Ovary (tissue), 10 donors: ENCODE measurements at regions of chr12 and their contacts with region 1.

Region 1: DNA sequence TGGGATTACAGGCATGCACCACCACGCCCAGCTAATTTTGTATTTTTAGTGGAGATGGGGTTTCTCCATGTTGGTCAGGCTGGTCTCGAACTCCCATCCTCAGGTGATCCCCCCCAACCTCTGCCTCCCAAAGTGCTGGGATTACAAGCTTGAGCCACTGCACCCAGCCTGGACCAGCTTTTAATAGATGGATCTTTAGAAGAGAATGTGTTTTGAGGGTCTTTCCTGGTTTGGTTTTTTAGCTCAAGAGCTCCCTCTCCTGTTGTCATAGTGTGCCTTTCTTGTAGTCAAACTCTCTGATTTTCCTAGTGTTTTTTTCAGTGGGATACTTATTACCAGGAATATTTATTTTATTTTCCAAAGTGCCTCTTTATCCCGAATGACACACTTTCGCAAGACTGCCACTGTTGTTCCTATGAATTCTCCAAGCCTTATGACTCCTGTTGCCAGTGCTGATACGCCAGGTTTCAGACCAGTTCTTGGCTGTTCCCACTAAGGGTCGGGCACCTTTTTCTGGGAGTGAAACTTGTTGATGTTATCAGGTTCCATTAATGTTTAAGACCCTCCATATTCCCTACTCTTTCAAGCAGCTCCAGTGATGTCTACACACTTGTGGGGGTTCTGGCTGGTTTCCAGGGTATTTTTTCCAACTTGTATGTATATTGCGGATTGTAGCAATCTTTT is 31.5 kb upstream of the LIMA1 start:
- DNase-seq: no peak
- H3K4me3 ChIP-seq: no peak overlapping the region
- H3K27ac ChIP-seq: no peak overlapping the region
- H3K4me1 ChIP-seq: no peaks in the 10 kb centered on the region
- H3K27me3 ChIP-seq: no peaks in the 10 kb centered on the region
- CTCF ChIP-seq: peak; percentile 33 to 50 (median 44)
- EP300 ChIP-seq: no peak
- POLR2A ChIP-seq: no peak

Region 2: DNA sequence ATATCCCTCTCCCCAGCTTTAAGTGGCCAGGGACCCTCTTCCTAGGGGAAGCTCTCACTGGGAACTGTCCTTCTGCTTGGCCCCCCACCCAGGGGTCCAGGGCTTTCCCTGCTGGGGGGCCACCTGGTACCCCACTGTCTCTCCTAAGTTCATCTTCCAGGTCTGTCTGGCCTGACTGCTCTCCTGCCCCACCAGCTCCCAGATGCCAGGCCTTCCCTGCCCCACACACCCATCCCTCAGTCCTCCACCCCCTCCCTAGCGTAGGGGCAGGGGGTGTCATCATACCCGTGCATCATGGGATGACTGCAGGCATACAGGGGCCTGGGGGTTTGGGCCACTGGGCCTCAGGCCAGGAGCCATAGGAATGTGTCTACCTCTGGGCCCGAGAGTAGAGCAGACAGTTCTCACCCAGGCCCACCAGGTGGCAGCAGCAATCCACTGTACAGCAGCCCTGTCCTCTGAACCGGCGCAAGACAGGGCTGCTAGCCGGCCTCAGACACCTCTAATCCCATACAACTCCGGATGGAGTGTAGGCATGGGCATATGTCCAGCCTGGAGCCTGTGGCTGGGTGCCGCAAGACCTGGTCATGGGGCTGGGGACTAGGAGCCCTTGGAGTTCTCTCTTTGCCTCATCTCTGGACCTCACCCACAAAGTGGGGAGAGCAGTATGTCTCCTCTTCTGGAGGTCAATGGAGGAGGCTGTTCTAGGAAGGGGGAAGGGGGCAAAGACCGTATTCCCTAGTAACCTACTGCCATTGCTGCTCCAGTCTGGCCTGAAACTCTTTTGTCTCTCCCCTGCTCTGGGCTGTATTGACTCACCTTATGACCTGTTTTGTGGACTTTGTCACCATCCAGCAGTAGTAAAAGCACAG is 239.6 kb before region 1 on chr12:
- intact Hi-C with region 1: loop called in 3 of 4 experiments (anchors 10 kb)
- DNase-seq: peak; percentile 78 to 90 (median 88)
- H3K4me3 ChIP-seq: no peak overlapping the region
- H3K27ac ChIP-seq: no peak overlapping the region
- H3K4me1 ChIP-seq: no peaks in the 10 kb centered on the region
- H3K27me3 ChIP-seq: no peaks in the 10 kb centered on the region
- CTCF ChIP-seq: peak; percentile 87 to 96 (median 92)
- EP300 ChIP-seq: no peak
- POLR2A ChIP-seq: no peak

Region 3: GRCh38 chr12:50084775-50085614 is 229.8 kb before region 1 on chr12 and contains the start of gene SMARCD1:
- intact Hi-C with region 1: loop called in 1 of 4 experiments (anchors 10 kb)
- DNase-seq: peak; percentile 91 to 93 (median 91)
- H3K4me3 ChIP-seq: peak within 1 kb of the TSS; percentile 85
- H3K27ac ChIP-seq: peak within 1 kb of the TSS; percentile 79 to 96
- H3K4me1 ChIP-seq: peaks cover 2% of the 10 kb centered on the region
- H3K27me3 ChIP-seq: no peaks in the 10 kb centered on the region
- CTCF ChIP-seq: no peak
- EP300 ChIP-seq: no peak
- POLR2A ChIP-seq: no peak
- total RNA-seq, gene SMARCD1: 33.5 to 57.7 (median 50.7) TPM

Region 4: GRCh38 chr12:50187084-50187900 is 127.5 kb before region 1 on chr12:
- intact Hi-C with region 1: loop called in 2 of 4 experiments (anchors 10 kb)
- DNase-seq: no peak
- H3K4me3 ChIP-seq: no peak overlapping the region
- H3K27ac ChIP-seq: no peak overlapping the region
- H3K4me1 ChIP-seq: peaks cover 4% of the 10 kb centered on the region
- H3K27me3 ChIP-seq: no peaks in the 10 kb centered on the region
- CTCF ChIP-seq: no peak
- EP300 ChIP-seq: no peak
- POLR2A ChIP-seq: no peak

Region 5: DNA sequence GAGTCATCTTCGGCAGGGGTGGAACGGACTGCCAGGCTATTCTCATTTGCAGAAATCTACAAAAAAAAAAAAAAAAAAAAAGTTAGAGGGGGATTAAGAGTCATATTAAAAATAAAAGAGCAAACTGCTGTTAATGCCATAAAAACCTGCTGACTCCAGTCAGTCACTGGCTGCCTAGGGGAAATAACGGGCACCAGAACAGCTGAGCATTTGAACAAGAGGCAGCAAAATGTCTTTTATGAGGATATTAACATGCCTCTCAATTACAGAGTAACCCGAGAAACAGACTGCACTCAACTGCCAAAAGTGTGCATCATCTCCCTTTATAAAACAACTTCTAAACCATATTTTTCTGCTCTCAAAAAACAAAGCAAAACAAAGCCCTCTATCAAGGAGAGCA is 118.9 kb before region 1 on chr12:
- intact Hi-C with region 1: loop called in 1 of 4 experiments (anchors 10 kb)
- DNase-seq: no peak
- H3K4me3 ChIP-seq: no peak overlapping the region
- H3K27ac ChIP-seq: no peak overlapping the region
- H3K4me1 ChIP-seq: no peaks in the 10 kb centered on the region
- H3K27me3 ChIP-seq: no peaks in the 10 kb centered on the region
- CTCF ChIP-seq: no peak
- EP300 ChIP-seq: no peak
- POLR2A ChIP-seq: no peak

Region 6: GRCh38 chr12:50257686-50258551 is 56.9 kb before region 1 on chr12:
- intact Hi-C with region 1: no loop called
- DNase-seq: peak in 2 of 5 donors; percentile 26 to 58
- H3K4me3 ChIP-seq: no peak overlapping the region
- H3K27ac ChIP-seq: no peak overlapping the region
- H3K4me1 ChIP-seq: peaks cover 9% of the 10 kb centered on the region
- H3K27me3 ChIP-seq: no peaks in the 10 kb centered on the region
- CTCF ChIP-seq: no peak
- EP300 ChIP-seq: no peak
- POLR2A ChIP-seq: no peak